HAP-1 (cell line): ENCODE measurements at regions of chr4 and their contacts with region 1.

Region 1: DNA sequence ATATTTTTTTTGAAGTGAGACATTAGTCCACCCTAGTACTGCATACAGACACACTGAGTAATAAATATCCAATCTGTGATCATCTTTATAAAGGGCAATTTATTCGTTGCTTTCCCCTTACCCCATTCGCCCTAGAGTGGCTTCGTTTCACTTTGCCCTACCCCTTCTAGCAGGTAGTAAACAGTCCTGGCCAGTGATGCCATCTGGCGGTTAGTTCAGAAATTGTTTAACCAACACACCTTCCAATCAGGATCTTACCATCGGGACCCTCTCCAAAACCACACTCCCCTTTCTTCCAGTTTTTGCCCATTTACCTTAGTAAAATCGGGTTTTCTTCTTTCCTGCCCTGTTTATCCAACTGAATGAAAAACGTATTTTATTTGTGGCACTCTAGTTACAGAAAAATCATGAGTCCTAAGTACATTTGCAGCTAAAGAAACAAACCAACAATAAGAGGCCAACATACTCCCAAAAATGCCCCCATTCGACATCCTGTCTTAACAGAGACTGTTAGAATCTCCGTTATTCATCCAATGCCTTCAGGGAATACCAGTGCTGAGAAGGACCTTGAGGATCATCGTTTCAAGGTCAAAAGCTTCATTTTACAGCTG is 2.2 kb downstream of the PPA2 start:
- DNase-seq: peak; percentile 71 to 83
- H3K4me3 ChIP-seq: peak overlapping the region; percentile 93
- H3K4me1 ChIP-seq: peaks cover 6% of the 10 kb centered on the region
- H3K27me3 ChIP-seq: no peaks in the 10 kb centered on the region

Region 2: DNA sequence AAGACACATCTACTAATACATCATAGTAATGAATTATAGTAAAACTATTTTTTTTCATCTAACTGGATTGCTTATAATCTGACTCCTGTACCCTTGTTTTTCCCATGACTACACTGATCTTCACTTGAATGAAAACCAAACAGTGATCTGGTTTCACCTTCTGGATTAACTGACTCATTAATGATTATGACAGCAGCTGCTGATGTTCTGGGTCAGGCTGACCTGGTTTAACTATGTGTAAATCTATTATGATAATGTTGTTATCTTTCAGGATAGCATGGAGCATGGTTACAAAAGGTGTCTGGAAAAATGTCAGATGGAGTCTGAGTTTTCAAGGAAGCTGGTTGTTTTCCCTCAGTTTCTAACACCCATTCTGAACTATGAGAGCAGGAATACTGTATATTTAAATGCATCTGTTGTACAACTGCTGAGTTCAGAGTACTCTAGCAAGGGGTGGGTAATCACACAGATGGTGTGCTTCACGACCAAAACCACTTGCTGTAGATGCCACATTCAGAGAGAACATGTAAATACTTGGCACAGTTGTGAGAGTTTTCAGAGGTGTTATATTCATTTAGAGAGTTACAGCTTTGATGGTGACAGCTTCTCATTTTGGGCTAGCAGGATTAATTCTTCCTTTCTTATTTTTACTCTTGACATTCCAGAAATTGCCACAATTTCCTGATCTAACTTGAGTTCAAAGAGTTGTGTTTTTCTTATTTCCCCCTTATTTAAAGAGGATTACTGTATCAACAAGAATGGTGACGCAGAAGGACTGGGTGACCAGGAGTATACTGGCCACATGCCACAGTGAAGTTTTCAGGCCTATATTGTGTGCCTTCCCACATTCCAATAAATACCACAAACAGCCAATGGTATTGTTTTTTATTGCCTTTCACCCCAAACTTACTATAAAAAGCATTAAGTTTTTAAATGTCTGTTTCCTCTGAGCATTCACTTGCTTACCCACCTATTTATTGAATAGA is 574.7 kb before region 1 on chr4:
- in situ Hi-C with region 1: loop called (anchors 25 kb)
- DNase-seq: no peak
- H3K4me3 ChIP-seq: no peak overlapping the region
- H3K4me1 ChIP-seq: no peaks in the 10 kb centered on the region
- H3K27me3 ChIP-seq: no peaks in the 10 kb centered on the region

Region 3: GRCh38 chr4:105140684-105141490 is 330.8 kb before region 1 on chr4:
- in situ Hi-C with region 1: loop called (anchors 5 kb)
- DNase-seq: peak; percentile 34 to 51
- H3K4me3 ChIP-seq: no peak overlapping the region
- H3K4me1 ChIP-seq: peaks cover 16% of the 10 kb centered on the region
- H3K27me3 ChIP-seq: no peaks in the 10 kb centered on the region

Region 4: DNA sequence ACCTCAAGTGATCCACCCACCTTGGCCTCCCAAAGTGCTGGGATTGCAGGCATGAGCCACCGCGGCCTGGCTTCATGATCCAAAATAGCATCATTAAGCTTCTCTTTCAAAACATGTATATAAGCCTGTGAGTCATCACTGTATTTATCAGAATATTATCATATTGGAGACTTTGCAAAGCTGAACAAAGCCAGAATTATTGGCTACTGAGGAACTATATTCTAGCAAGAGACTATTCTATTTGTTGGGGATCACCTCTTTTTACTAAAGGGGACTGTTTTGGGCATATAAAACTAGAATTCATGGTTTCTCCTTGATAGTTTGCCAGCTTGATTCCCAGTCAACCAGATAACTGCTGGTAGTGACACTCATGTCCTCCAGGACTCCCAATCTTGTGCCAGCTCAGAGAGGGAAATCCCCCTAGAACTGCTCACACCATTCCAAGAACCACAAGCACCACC is 284.9 kb before region 1 on chr4:
- in situ Hi-C with region 1: no loop called
- DNase-seq: no peak
- H3K4me3 ChIP-seq: no peak overlapping the region
- H3K4me1 ChIP-seq: peaks cover 20% of the 10 kb centered on the region
- H3K27me3 ChIP-seq: no peaks in the 10 kb centered on the region